CD8-positive, alpha-beta T cell (primary cell): ENCODE measurements at regions of chr7 and their contacts with region 1.

Region 1: DNA sequence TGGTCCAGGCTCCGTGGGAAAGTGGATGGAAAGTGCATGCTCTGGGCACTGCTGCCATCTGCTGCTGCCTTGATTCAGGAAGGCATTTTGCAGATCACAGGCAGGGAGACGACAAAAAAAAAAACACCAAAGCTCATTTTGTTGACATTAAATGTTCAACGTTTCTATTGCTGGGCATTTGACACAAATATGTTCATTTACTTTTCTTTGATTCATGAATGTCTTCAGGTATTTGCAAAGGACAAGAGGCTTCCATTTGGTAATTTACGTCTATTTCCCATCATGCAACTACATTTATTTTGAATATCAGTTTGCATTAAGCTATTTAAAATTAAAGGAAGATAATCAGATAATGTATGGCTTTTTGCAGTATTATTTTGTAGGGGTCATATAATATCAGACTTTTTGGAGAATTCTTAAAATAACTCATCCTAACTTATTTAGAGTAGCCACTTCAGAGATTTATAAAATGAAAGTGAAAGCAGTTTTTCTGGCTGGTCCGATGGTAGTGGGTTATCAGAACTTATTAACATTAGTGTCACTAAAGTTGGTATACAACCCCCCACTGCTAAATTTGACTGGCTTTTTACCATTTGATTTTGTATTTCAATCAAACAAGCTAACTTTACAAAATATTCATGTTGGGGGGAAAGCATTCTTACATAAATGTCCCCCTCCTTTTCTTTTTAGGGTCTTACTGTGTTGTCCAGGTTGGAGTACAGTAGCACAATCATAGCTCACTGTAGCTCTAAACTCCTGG is 65.3 kb downstream of the PDIA4 start:
- DNase-seq: peak; percentile 33 to 84 (median 63)
- ATAC-seq: peak; percentile 51
- H3K4me3 ChIP-seq: peak overlapping the region; percentile 65 to 74
- H3K4me3 Mint-ChIP-seq: peak overlapping the region; percentile 92
- H3K27ac ChIP-seq: peak overlapping the region; percentile 69 to 80
- H3K27ac Mint-ChIP-seq: peak overlapping the region; percentile 90
- H3K4me1 ChIP-seq: peaks cover 12% of the 10 kb centered on the region
- H3K4me1 Mint-ChIP-seq: peaks cover 24% of the 10 kb centered on the region
- H3K27me3 ChIP-seq: no peaks in the 10 kb centered on the region
- H3K27me3 Mint-ChIP-seq: no peaks in the 10 kb centered on the region
- CTCF ChIP-seq: peak; percentile 77

Region 2: GRCh38 chr7:147607151-147607800 is 1355.7 kb before region 1 on chr7:
- CTCF ChIA-PET with region 1: no interaction called
- POLR2A ChIA-PET with region 1: no interaction called
- intact Hi-C with region 1: no loop called
- DNase-seq: no peak
- ATAC-seq: no peak
- H3K4me3 ChIP-seq: no peak overlapping the region
- H3K4me3 Mint-ChIP-seq: no peak overlapping the region
- H3K27ac ChIP-seq: no peak overlapping the region
- H3K27ac Mint-ChIP-seq: no peak overlapping the region
- H3K4me1 ChIP-seq: no peaks in the 10 kb centered on the region
- H3K4me1 Mint-ChIP-seq: no peaks in the 10 kb centered on the region
- H3K27me3 ChIP-seq: no peaks in the 10 kb centered on the region
- H3K27me3 Mint-ChIP-seq: no peaks in the 10 kb centered on the region
- CTCF ChIP-seq: no peak

Region 3: GRCh38 chr7:148264933-148265557 is 698.0 kb before region 1 on chr7:
- CTCF ChIA-PET with region 1: no interaction called
- POLR2A ChIA-PET with region 1: no interaction called
- intact Hi-C with region 1: loop called in 1 of 2 experiments (anchors 5 kb)
- DNase-seq: peak in 1 of 9 experiments; percentile 7
- ATAC-seq: no peak
- H3K4me3 ChIP-seq: no peak overlapping the region
- H3K4me3 Mint-ChIP-seq: no peak overlapping the region
- H3K27ac ChIP-seq: no peak overlapping the region
- H3K27ac Mint-ChIP-seq: no peak overlapping the region
- H3K4me1 ChIP-seq: peaks cover 7% of the 10 kb centered on the region
- H3K4me1 Mint-ChIP-seq: peaks cover 6% of the 10 kb centered on the region
- H3K27me3 ChIP-seq: no peaks in the 10 kb centered on the region
- H3K27me3 Mint-ChIP-seq: peaks cover 16% of the 10 kb centered on the region
- CTCF ChIP-seq: peak; percentile 53

Region 4: DNA sequence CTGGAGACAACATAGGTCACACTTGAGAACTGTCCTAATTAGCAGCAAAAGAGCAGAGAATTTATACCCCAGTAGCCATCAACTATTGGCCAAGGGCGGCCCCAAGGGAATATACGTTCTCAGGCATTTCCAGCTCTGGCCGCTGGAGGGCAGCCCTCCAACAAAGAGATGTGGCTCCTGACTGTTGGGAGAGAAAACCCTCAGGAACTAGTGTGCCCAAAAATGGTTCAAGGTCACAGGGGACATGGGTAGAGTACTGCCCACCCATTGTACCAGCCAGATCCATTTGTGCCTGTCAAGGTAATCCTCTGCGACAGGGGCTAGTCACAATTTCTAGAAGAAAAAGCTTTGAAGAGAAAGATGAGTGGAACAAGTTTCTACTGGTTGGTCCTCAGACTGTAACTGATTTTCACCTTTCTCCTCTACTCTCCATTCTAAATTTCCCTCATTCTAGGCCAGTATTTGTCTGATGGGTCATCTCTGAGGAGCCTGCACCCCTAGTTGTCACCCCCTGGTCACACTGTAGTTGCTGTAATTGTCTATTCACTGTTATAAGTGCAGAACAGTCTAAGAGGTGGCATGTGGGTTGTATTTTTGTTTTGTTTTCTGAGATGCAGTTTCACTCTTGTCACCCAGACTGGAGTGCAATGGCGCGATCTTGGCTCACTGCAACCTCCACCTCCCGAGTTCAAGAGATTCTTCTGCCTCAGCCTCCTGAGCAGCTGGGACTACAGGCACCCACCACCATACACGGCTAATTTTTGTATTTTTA is 387.2 kb before region 1 on chr7:
- CTCF ChIA-PET with region 1: interaction called, 39 read pairs
- POLR2A ChIA-PET with region 1: interaction called, 3 read pairs
- intact Hi-C with region 1: loop called (anchors 1 kb)
- DNase-seq: peak; percentile 31 to 83 (median 71)
- ATAC-seq: peak; percentile 86
- H3K4me3 ChIP-seq: no peak overlapping the region
- H3K4me3 Mint-ChIP-seq: no peak overlapping the region
- H3K27ac ChIP-seq: no peak overlapping the region
- H3K27ac Mint-ChIP-seq: no peak overlapping the region
- H3K4me1 ChIP-seq: peaks cover 4% of the 10 kb centered on the region
- H3K4me1 Mint-ChIP-seq: peaks cover 2% of the 10 kb centered on the region
- H3K27me3 ChIP-seq: no peaks in the 10 kb centered on the region
- H3K27me3 Mint-ChIP-seq: peaks cover 2% of the 10 kb centered on the region
- CTCF ChIP-seq: peak; percentile 86

Region 5: GRCh38 chr7:148856891-148857290 is 106.1 kb before region 1 on chr7:
- CTCF ChIA-PET with region 1: interaction called, 30 read pairs
- POLR2A ChIA-PET with region 1: no interaction called
- intact Hi-C with region 1: loop called (anchors 1 kb)
- DNase-seq: peak in 2 of 9 experiments; percentile 34 to 47
- ATAC-seq: no peak
- H3K4me3 ChIP-seq: no peak overlapping the region
- H3K4me3 Mint-ChIP-seq: no peak overlapping the region
- H3K27ac ChIP-seq: no peak overlapping the region
- H3K27ac Mint-ChIP-seq: no peak overlapping the region
- H3K4me1 ChIP-seq: no peaks in the 10 kb centered on the region
- H3K4me1 Mint-ChIP-seq: peaks cover 12% of the 10 kb centered on the region
- H3K27me3 ChIP-seq: no peaks in the 10 kb centered on the region
- H3K27me3 Mint-ChIP-seq: no peaks in the 10 kb centered on the region
- CTCF ChIP-seq: no peak

Region 6: GRCh38 chr7:148940702-148941597 is 22.1 kb before region 1 on chr7:
- CTCF ChIA-PET with region 1: interaction called, 12 read pairs
- POLR2A ChIA-PET with region 1: interaction called, 8 read pairs
- intact Hi-C with region 1: loop called (anchors 1 to 2 kb)
- DNase-seq: peak; percentile 31 to 87 (median 66)
- ATAC-seq: peak; percentile 65
- H3K4me3 ChIP-seq: peak overlapping the region; percentile 90 to 96
- H3K4me3 Mint-ChIP-seq: peak overlapping the region; percentile 98
- H3K27ac ChIP-seq: peak overlapping the region; percentile 89 to 91
- H3K27ac Mint-ChIP-seq: peak overlapping the region; percentile 98
- H3K4me1 ChIP-seq: peaks cover 9% of the 10 kb centered on the region
- H3K4me1 Mint-ChIP-seq: peaks cover 17% of the 10 kb centered on the region
- H3K27me3 ChIP-seq: no peaks in the 10 kb centered on the region
- H3K27me3 Mint-ChIP-seq: no peaks in the 10 kb centered on the region
- CTCF ChIP-seq: no peak